OCI-LY7 (cell line): ENCODE measurements at regions of chr11 and their contacts with region 1.

Region 1: GRCh38 chr11:108467091-108467823 is at the start of gene C11orf65:
- DNase-seq: peak; percentile 95
- H3K4me3 ChIP-seq: peak within 1 kb of the TSS; percentile 89
- H3K27ac ChIP-seq: peak within 1 kb of the TSS; percentile 35
- H3K4me1 ChIP-seq: peaks cover 11% of the 10 kb centered on the region
- CTCF ChIP-seq: no peak
- total RNA-seq, gene C11orf65: 0.15 and 0.98 TPM in 2 replicates

Region 2: DNA sequence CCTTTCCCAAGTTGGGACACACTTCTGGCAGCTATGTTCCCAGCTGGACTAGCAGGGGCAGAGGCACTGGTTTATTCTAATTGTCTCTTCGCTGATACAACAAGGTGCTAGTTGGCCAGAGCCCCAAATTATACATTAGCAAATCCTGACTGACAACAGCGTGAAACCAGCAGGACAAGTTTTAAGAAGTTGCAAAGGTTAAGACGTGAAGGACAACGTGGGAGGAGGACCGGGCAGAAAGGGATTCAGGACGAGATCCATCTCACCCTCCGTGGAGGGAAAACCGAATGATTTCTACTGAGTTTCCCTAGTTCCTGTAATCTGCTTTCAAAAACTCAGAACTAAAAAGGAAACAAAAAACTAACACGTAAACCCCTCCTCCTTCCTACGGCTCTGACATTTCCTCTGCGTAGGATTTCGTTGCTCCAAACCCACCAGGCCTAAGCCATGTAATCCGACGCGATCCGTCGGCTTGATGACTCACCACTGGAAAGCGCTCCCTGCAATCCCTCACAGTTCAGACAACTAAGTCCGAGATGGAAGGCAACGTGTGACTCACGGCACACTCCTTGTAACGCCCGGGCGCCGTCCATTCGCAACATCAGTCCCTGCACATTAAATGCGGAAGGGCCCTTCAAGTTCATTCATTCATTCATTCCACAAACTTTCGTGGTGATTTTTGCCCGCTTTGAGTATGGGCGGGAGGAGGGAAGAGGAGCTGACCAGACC is 30.2 kb after region 1 on chr11:
- CTCF ChIA-PET with region 1: no interaction called
- POLR2A ChIA-PET with region 1: no interaction called
- intact Hi-C with region 1: no loop called
- DNase-seq: no peak
- H3K4me3 ChIP-seq: no peak overlapping the region
- H3K27ac ChIP-seq: no peak overlapping the region
- H3K4me1 ChIP-seq: no peaks in the 10 kb centered on the region
- CTCF ChIP-seq: no peak

Region 3: DNA sequence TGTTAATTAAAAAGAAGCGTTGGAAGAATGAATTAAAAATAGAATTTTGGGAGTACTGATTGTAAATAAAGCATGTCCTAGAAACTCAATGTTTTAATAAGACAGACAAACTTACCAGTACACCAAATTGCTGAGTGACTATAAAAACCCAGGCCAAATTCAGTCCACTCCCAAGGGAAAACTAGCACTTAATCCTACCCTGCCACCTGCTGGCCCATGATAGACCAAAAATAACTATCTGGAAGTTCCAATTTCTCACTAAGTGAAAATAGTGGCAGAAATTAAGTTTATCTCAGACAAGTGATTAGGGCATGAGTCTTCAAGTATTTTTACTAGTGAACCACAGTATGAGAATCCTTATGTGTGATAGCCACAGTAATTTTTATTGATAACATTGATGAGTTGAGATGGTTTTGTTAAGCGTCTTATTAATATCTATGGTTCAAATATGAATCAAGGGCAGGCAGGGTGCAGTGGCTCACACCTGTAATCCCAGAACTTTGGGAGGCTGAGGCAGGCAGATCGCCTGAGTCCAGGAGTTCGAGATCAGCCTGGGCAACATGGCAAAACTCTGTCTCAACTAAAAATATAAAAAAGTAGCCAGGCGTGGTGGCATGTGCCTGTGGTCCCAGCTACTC is 187.9 kb after region 1 on chr11:
- CTCF ChIA-PET with region 1: no interaction called
- POLR2A ChIA-PET with region 1: no interaction called
- intact Hi-C with region 1: loop called (anchors 5 kb)
- DNase-seq: peak; percentile 70
- H3K4me3 ChIP-seq: no peak overlapping the region
- H3K27ac ChIP-seq: no peak overlapping the region
- H3K4me1 ChIP-seq: peaks cover 34% of the 10 kb centered on the region
- CTCF ChIP-seq: peak; percentile 74